WTC11 (cell line): ENCODE measurements at regions of chr13 and their contacts with region 1.

Region 1: GRCh38 chr13:26680123-26680450 is 80.5 kb downstream of the GPR12 start:
- DNase-seq: peak; percentile 38
- ATAC-seq: peak; percentile 90
- H3K4me3 Mint-ChIP-seq: no peak overlapping the region
- H3K27ac Mint-ChIP-seq: peak overlapping the region; percentile 55
- H3K4me1 Mint-ChIP-seq: peaks cover 27% of the 10 kb centered on the region
- H3K27me3 Mint-ChIP-seq: no peaks in the 10 kb centered on the region
- CTCF ChIP-seq: no peak

Region 2: DNA sequence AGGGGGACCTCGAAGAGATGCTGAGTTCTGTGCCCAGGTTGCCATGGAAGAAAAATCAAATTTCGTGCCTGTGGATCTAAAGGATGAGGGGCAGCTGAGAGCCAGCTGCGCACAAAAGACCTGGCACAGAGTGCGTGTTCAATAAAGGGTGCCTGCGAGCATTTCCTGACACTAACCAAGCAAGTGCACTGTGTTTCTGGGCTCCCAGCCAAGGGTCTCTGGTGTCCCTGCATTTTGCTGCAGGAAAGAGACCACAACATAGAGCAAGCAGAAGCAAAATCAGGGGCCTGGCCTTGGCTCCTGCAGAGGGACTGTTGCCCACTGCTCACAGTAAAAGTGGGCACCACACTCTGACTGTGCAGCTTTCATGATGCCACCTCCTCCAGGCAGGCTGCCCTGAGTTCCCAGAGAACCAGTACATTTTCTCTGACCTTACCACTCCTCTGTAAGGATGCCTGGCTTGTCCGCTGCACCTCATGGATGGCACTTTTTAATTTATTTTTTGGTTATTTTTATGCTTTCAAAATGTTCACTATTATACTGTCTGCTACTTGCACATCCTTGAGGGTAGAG is 151.3 kb after region 1 on chr13:
- CTCF ChIA-PET with region 1: no interaction called
- POLR2A ChIA-PET with region 1: interaction called, 10 read pairs
- DNase-seq: no peak
- ATAC-seq: no peak
- H3K4me3 Mint-ChIP-seq: no peak overlapping the region
- H3K27ac Mint-ChIP-seq: no peak overlapping the region
- H3K4me1 Mint-ChIP-seq: peaks cover 12% of the 10 kb centered on the region
- H3K27me3 Mint-ChIP-seq: no peaks in the 10 kb centered on the region
- CTCF ChIP-seq: no peak